HEK293T (cell line): ENCODE measurements at regions of chr10 and their contacts with region 1.

Region 1: GRCh38 chr10:89029785-89030437 is 39.3 kb downstream of the FAS start:
- DNase-seq: peak; percentile 67

Region 2: DNA sequence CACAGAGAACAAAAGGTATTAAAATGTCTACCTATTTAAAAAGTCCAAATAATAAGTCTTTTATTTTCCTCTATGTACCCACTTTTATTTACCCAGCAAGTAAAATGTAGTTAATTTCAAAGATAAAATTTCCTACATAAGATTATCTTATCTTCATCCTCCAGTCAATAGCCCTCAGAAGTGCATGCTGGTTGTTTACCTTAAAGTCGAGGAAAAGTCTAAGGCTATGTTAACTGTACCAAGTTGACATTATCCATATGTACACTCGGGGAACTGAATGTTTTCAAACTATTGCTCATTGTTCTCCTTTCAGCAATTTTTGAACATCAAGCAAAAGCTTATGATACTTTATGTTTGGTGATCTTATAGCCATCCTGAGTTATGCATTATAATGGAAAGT is 389.7 kb before region 1 on chr10:
- CTCF ChIA-PET with region 1: no interaction called
- POLR2A ChIA-PET with region 1: no interaction called
- DNase-seq: no peak

Region 3: DNA sequence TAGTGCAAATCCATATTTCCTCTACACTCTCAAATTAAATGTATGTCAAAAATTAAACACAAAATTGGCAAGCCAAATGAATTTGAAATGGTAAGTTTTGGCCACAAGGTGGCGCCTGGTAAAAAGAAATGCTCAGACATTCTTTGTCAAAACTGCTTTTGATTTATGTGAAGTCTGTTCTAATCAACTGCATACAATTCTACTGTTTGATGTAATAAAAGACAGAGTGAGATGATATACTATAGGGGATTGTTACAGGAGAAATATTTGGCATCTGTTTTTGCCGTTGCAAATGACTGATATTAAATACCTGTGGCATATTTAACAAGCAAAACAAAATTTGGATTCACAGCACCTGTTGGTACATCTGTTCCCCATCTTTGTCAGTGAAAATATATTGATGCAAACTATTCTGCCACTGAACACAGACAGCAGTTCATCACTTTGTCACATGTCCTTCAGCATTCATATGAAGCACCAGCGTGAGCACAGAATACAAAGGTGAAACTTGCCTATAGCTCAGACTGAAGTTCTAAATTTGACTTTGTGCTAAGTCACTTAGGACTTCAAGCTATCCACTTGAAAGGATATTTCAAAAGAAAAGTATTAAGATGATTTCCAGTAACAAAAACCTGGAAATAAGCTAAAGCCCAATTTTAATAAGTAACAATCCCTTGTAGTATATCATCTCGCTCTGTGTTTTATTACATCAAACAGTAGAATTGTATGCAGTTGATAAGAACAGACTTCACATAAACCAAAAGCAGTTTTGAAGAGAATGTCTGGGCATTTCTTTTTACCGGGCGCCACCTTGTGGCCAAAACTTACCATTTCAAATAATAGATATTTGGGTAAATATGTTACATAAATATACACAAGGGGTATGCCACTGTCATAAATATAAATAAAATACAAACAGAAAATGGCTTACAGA is 187.4 kb after region 1 on chr10:
- CTCF ChIA-PET with region 1: interaction called, 14 read pairs
- POLR2A ChIA-PET with region 1: no interaction called
- DNase-seq: peak; percentile 23